Activated CD4-positive, alpha-beta T cell treated with anti-CD3 and anti-CD28 coated beads, Interleukin-2, amount 10 ng/mL, durations not matched to agents 7 days and 5 days (primary cell): ENCODE measurements at regions of chr22 and their contacts with region 1.

Region 1: DNA sequence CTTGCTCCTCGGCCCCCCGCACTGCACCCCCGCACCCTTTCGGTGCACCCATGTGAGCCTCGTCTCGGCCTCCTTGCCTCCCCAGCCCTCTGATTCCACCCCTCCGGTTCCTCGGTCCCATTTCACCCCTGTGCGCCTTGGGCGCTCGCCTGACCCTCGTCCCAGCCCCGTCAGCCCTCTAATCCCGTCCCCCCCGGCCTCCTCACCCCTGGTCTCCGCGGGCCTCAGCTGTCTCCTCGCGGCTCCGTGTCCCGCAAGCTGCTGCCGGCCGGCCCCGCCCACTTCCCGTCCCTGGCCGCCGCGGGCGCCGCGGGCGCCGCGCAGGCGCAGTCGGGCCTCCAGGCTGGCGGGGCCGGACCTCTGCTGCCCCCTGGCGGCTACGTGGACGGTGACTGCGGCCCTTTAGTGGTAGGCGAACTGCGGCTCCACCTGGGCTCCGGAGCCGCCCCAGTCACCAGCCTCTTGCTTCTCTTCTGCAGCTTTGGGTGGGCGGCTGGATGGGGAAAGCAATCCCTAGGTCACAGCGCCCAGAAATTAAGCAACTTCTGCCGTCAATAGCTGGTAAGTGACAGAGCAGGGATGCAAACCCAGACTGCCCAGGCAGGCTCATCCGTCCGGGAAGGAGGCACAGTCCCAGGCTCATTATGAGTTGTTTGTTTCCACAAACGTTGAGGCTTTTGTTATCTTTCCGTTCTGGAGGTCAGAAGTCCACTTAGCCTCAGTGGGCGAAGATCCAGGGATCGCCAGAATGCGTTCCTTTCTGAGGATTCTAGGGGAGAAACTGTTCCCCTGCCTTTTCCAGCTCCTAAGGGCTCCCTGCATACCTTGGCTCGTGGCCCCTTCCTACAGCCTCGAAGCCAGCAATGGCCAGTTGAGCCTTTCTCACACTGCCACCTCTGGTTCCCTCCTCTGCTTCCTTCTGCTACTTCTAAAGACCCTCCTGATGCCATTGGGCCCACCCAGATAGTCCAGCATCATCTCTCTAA is at the start of gene PPM1F:
- DNase-seq: peak; percentile 87
- H3K4me3 Mint-ChIP-seq: peak within 1 kb of the TSS; percentile 78
- H3K27ac Mint-ChIP-seq: peak within 1 kb of the TSS; percentile 63
- H3K4me1 Mint-ChIP-seq: peaks cover 13% of the 10 kb centered on the region
- H3K27me3 Mint-ChIP-seq: no peaks in the 10 kb centered on the region
- total RNA-seq, gene PPM1F: 15.1 to 20.4 TPM

Region 2: GRCh38 chr22:21857481-21857914 is 95.4 kb before region 1 on chr22:
- CTCF ChIA-PET with region 1: no interaction called
- POLR2A ChIA-PET with region 1: no interaction called
- DNase-seq: no peak
- H3K4me3 Mint-ChIP-seq: no peak overlapping the region
- H3K27ac Mint-ChIP-seq: no peak overlapping the region
- H3K4me1 Mint-ChIP-seq: peaks cover 64% of the 10 kb centered on the region
- H3K27me3 Mint-ChIP-seq: no peaks in the 10 kb centered on the region

Region 3: GRCh38 chr22:21867528-21868266 is 85.2 kb before region 1 on chr22 and contains the start of gene MAPK1:
- CTCF ChIA-PET with region 1: interaction called, 11 read pairs
- POLR2A ChIA-PET with region 1: no interaction called
- DNase-seq: peak; percentile 92
- H3K4me3 Mint-ChIP-seq: peak within 1 kb of the TSS; percentile 93
- H3K27ac Mint-ChIP-seq: peak within 1 kb of the TSS; percentile 93
- H3K4me1 Mint-ChIP-seq: peaks cover 38% of the 10 kb centered on the region
- H3K27me3 Mint-ChIP-seq: no peaks in the 10 kb centered on the region
- total RNA-seq, gene MAPK1: 123 to 139 TPM

Region 4: DNA sequence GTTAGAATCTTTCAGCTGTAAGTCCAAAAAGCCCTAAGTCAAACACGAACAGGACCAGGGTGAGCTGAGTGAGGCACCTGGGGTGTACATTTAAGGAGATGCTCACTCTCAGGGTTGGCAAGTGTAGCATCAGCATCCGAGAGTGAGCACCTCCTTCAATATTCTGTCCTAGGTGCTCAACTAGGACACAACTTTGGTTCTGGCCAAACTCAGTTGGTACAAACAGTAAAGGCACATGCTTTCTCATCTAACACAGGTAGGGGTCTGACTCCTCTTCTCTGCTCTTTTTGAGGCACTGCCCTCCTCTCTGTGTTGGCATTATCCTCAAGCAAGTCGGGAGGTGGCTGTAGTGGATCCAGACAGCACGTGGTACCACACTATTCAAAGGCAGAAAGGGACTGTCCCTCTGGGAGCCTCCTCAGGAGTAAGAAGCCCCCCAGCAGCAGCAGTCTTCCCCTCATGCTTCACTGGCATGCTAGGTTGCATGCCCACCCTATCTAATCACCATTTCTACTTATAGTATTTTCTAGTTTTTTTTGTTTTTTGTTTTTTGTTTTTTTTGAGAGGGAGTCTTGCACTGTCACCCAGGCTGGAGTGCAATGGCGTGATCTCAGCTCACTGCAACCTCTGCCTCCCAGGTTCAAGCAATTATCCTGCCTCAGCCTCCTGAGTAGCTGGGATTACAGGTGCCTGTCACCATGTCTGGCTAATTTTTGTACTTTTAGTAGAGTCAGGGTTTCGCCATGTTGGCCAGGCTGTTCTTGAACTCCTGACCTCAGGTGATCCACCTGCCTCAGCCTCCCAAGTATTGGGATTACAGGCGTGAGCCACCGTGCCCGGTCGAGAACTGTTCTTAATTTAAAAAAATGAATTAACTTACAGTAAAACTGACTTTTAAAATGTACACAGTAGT is 70.8 kb before region 1 on chr22:
- CTCF ChIA-PET with region 1: no interaction called
- POLR2A ChIA-PET with region 1: no interaction called
- DNase-seq: no peak
- H3K4me3 Mint-ChIP-seq: no peak overlapping the region
- H3K27ac Mint-ChIP-seq: no peak overlapping the region
- H3K4me1 Mint-ChIP-seq: peaks cover 2% of the 10 kb centered on the region
- H3K27me3 Mint-ChIP-seq: no peaks in the 10 kb centered on the region

Region 5: GRCh38 chr22:21915624-21916308 is 37.1 kb before region 1 on chr22:
- CTCF ChIA-PET with region 1: no interaction called
- POLR2A ChIA-PET with region 1: no interaction called
- DNase-seq: no peak
- H3K4me3 Mint-ChIP-seq: no peak overlapping the region
- H3K27ac Mint-ChIP-seq: no peak overlapping the region
- H3K4me1 Mint-ChIP-seq: no peaks in the 10 kb centered on the region
- H3K27me3 Mint-ChIP-seq: no peaks in the 10 kb centered on the region

Region 6: GRCh38 chr22:21938071-21938822 is 14.6 kb before region 1 on chr22:
- CTCF ChIA-PET with region 1: interaction called, 73 read pairs
- POLR2A ChIA-PET with region 1: no interaction called
- DNase-seq: peak; percentile 89
- H3K4me3 Mint-ChIP-seq: peak overlapping the region; percentile 64
- H3K27ac Mint-ChIP-seq: peak overlapping the region; percentile 57
- H3K4me1 Mint-ChIP-seq: peaks cover 57% of the 10 kb centered on the region
- H3K27me3 Mint-ChIP-seq: no peaks in the 10 kb centered on the region

Region 7: GRCh38 chr22:21972293-21972779 is 19.5 kb after region 1 on chr22:
- CTCF ChIA-PET with region 1: interaction called, 20 read pairs
- POLR2A ChIA-PET with region 1: no interaction called
- DNase-seq: peak; percentile 52
- H3K4me3 Mint-ChIP-seq: no peak overlapping the region
- H3K27ac Mint-ChIP-seq: no peak overlapping the region
- H3K4me1 Mint-ChIP-seq: no peaks in the 10 kb centered on the region
- H3K27me3 Mint-ChIP-seq: no peaks in the 10 kb centered on the region